Panc1 (cell line): ENCODE measurements at regions of chr9 and their contacts with region 1.

Region 1: DNA sequence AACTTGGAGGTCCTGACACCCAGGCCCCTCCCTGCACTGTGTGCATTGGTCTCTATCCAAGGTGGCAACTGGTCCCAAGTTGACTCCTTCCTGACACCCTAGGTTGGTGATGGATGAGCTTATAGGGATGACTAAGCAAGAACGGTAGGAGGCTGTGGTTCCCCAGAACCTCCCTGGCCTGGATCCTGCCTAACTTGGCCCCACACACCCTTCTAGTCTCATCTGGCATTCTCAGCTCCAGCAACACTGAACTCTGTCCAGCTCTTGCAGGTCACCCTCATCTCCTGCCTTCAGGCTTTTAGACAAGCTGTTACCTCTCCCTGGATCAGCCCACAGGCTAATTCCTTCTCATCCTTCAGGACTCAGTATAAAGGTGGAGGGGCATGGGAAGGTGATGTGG is 16.5 kb downstream of the AQP3 start:
- DNase-seq: no peak
- ATAC-seq: no peak
- H3K4me3 ChIP-seq: no peak overlapping the region
- H3K27ac ChIP-seq: no peak overlapping the region
- H3K4me1 ChIP-seq: no peaks in the 10 kb centered on the region
- H3K27me3 ChIP-seq: no peaks in the 10 kb centered on the region
- CTCF ChIP-seq: no peak

Region 2: DNA sequence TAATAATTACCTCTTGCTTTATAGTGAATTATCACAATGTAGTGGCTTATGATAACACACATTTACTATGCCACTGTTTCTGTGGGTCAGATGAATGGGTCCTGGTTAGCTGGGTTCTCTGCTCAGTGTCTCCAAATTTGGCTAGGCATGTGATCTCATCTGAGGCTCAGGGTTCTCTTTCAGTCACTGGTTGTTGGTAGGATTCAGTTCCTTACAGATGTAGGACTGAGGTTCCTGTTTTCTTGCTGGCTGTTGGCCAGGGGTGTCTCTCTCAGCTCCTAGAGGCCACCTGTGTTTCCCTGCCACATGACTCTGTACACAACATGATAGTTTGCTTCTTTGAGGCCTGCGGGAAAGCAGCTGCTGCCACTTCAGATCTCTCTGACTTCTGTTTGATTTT is 133.5 kb before region 1 on chr9:
- CTCF ChIA-PET with region 1: no interaction called
- POLR2A ChIA-PET with region 1: interaction called, 10 read pairs
- in situ Hi-C with region 1: no loop called
- intact Hi-C with region 1: no loop called
- DNase-seq: no peak
- ATAC-seq: no peak
- H3K4me3 ChIP-seq: no peak overlapping the region
- H3K27ac ChIP-seq: no peak overlapping the region
- H3K4me1 ChIP-seq: peaks cover 6% of the 10 kb centered on the region
- H3K27me3 ChIP-seq: no peaks in the 10 kb centered on the region
- CTCF ChIP-seq: no peak